Uterus (tissue), 4 donors: ENCODE measurements at regions of chr14 and their contacts with region 1.

Region 1: GRCh38 chr14:63276492-63277342 is 42.0 kb downstream of the GPHB5 start:
- DNase-seq: no peak
- H3K4me3 ChIP-seq: no peak overlapping the region
- H3K27ac ChIP-seq: no peak overlapping the region
- H3K4me1 ChIP-seq: no peaks in the 10 kb centered on the region
- H3K27me3 ChIP-seq: no peaks in the 10 kb centered on the region
- CTCF ChIP-seq: peak; percentile 72 to 93 (median 82)
- POLR2A ChIP-seq: no peak

Region 2: DNA sequence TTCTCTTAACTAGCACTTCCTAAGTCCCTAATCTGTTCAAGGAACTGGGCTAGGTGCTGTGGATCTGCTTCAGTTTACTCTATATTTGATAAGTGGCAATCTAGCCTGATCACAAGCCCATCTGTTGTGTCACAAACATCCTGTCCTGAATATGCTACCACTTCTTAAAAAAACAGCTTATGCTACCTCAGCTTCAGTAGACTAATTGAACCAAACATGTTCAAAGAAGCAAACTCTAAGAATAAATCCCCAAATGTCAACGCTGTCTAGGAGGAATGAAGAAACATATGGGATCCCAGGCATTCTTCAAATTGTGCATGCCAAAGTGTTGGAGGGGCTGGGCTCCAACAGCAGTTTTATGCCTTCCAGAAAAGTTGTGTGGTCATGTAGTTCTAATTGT is 221.1 kb before region 1 on chr14:
- intact Hi-C with region 1: no loop called
- DNase-seq: no peak
- H3K4me3 ChIP-seq: no peak overlapping the region
- H3K27ac ChIP-seq: no peak overlapping the region
- H3K4me1 ChIP-seq: no peaks in the 10 kb centered on the region
- H3K27me3 ChIP-seq: no peaks in the 10 kb centered on the region
- CTCF ChIP-seq: no peak
- POLR2A ChIP-seq: no peak

Region 3: DNA sequence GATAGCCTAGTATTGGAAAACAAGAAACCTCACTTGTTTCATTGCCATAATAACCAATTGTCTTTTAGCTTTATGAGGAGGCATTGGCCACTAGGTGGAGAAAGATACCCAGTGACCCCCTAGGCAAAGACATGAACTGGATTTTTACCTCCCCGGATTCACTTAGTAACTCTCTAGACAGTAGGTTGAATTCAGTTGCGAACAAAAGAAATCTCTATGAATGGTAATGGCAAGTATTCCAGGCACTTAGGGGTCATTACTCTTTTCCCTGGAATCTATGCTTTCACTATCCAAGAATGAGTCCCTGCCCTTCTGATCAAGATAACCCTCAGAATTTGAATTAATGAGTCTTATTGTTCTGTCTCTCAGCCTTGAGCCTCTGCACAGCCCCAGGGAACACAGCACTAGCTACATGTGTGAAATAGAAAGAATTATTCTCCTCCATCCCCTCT is 101.9 kb before region 1 on chr14:
- intact Hi-C with region 1: loop called (anchors 10 kb)
- DNase-seq: peak in 1 of 2 donors; percentile 49
- H3K4me3 ChIP-seq: no peak overlapping the region
- H3K27ac ChIP-seq: no peak overlapping the region
- H3K4me1 ChIP-seq: peaks cover 0 to 5% of the 10 kb centered on the region in 2 donors
- H3K27me3 ChIP-seq: no peaks in the 10 kb centered on the region
- CTCF ChIP-seq: peak; percentile 71 to 84 (median 78)
- POLR2A ChIP-seq: no peak